Activated CD4-positive, alpha-beta memory T cell treated with anti-CD3 and anti-CD28 coated beads for 36 hours (primary cell): ENCODE measurements at regions of chr5 and their contacts with region 1.

Region 1: DNA sequence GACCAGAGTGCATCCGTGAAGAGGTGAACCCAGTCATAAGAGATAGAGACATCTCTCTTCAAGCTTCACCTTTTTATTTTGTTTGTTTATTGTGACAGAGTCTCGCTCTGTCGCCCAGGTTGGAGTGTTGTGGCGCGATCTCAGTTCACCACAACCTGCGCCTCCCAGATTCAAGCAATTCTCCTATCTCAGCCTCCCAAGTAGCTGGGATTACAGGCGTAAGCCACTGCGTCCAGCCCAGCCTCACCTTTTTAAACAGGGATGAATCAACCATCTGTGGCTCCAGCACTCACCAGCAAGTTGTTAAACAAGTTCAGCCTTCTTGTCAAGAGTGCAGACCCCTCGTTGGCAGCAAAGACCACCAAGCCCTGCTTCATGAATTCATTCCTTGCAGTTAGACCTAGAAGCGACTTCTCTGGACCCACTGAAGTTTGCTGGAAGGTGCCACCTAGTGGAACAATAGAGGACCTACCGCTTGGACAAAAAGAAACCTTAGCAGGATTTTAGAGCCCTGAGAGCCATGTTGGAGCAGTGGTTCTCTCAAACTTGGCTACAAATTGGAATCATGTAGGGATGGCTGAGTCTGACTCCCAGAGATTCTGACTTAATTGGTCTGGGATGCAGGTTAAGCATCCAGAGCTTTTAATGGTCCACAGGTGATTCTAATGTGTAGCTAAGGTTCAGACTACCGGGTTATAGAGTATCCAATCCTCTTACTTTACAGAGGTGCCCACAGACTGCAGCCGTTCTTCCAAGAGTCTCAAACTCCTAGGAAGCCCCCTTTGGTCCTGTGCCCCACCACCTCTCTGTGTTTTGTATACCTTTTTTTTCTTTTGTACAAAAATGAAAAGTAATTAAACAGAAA is 10.5 kb upstream of the GALNT10 start:
- DNase-seq: peak; percentile 37
- H3K4me3 Mint-ChIP-seq: no peak overlapping the region
- H3K27ac Mint-ChIP-seq: no peak overlapping the region
- H3K4me1 Mint-ChIP-seq: no peaks in the 10 kb centered on the region
- H3K27me3 Mint-ChIP-seq: peaks cover 3% of the 10 kb centered on the region

Region 2: GRCh38 chr5:153974131-153974812 is 205.8 kb before region 1 on chr5:
- CTCF ChIA-PET with region 1: interaction called, 11 read pairs
- POLR2A ChIA-PET with region 1: no interaction called
- intact Hi-C with region 1: loop called (anchors 1 kb)
- DNase-seq: peak; percentile 35
- H3K4me3 Mint-ChIP-seq: no peak overlapping the region
- H3K27ac Mint-ChIP-seq: no peak overlapping the region
- H3K4me1 Mint-ChIP-seq: no peaks in the 10 kb centered on the region
- H3K27me3 Mint-ChIP-seq: peaks cover 3% of the 10 kb centered on the region

Region 3: DNA sequence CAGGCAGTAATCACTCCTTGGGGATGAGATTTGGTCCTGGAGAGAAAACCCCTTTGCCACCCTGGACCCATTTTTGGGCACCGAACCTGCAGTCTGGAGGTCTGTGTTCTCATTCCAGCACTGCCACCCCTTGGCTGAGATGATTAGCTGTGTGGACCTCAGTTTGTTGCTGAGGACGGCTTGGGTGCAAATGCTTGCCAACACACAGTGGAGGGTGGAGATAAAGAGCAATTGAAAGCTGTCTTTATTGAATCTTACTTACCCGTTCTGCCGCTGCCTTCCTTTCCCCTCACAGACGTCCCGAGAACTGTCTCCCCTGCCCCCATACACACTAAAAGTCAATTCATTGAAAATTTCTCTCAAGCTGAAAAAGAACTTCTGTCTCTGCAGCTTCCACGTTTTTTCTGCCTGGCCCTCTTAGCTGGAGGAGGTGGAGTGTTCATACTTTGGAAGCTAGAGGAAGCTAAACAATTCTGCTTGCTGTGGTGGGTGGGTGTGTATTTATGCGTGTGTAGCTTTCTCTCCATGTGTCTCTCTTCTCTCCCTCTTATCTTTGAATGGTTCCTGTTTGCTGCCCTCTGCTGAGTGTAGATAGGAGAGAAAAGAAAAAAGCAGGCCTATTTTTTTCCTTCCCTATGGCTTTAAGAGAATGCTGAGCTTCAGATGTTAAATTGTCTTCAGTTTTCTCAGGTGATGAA is 17.0 kb after region 1 on chr5:
- CTCF ChIA-PET with region 1: interaction called, 42 read pairs
- POLR2A ChIA-PET with region 1: no interaction called
- intact Hi-C with region 1: no loop called
- DNase-seq: no peak
- H3K4me3 Mint-ChIP-seq: no peak overlapping the region
- H3K27ac Mint-ChIP-seq: peak overlapping the region; percentile 65
- H3K4me1 Mint-ChIP-seq: peaks cover 71% of the 10 kb centered on the region
- H3K27me3 Mint-ChIP-seq: no peaks in the 10 kb centered on the region

Region 4: DNA sequence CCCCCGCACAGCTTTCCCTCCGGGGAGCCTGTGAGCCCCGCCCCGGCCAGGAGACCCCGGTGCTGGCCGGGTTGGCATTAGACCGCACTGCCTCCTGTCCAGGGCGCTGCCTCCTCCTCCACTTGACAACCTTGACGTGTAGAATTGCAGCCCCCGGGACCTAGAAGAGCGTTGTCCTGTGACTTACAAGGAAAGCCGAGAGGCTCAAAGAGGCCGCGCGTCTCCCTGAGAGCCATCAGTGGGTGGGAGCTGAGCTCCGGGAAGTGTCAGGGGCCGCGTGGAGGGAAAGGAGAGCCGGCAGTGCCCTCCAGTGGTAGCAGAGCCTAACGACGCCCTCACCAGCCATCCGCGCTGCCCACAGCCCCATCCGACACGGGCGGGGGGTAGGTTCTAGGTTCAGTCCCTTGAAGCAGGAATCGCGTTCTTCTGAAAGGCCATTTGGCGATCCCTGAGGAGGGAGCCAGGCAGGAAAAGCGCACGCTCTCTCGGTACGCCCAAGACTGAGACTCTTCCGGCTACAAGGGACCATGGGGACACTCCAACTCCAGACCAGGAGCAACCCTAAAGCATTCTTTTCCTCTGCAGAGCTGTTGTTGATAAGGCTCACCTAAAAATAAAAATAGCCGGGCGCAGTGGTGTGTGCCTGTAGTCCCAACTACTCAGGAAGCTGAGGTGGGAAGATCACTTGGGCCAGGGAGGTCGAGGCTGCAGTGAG is 225.2 kb after region 1 on chr5:
- CTCF ChIA-PET with region 1: interaction called, 20 read pairs
- POLR2A ChIA-PET with region 1: no interaction called
- intact Hi-C with region 1: loop called (anchors 1 kb)
- DNase-seq: peak; percentile 83
- H3K4me3 Mint-ChIP-seq: peak overlapping the region; percentile 20
- H3K27ac Mint-ChIP-seq: no peak overlapping the region
- H3K4me1 Mint-ChIP-seq: peaks cover 10% of the 10 kb centered on the region
- H3K27me3 Mint-ChIP-seq: no peaks in the 10 kb centered on the region

Region 5: GRCh38 chr5:154493274-154493673 is 313.2 kb after region 1 on chr5:
- CTCF ChIA-PET with region 1: no interaction called
- POLR2A ChIA-PET with region 1: no interaction called
- intact Hi-C with region 1: no loop called
- DNase-seq: no peak
- H3K4me3 Mint-ChIP-seq: no peak overlapping the region
- H3K27ac Mint-ChIP-seq: no peak overlapping the region
- H3K4me1 Mint-ChIP-seq: no peaks in the 10 kb centered on the region
- H3K27me3 Mint-ChIP-seq: peaks cover 52% of the 10 kb centered on the region